ENCODE measurements at regions of chr19 and their contacts with region 1.

Region 1: GRCh38 chr19:9782330-9782729 is 13.8 kb upstream of the ZNF846 start:
- H3K4me3 ChIP-seq: no peak overlapping the region
- H3K27ac ChIP-seq: no peak overlapping the region
- H3K4me1 ChIP-seq: peaks cover 5% of the 10 kb centered on the region
- CTCF ChIP-seq: no peak

Region 2: GRCh38 chr19:9768175-9769112 is 13.9 kb before region 1 on chr19 and contains the start of gene ZNF846:
- CTCF ChIA-PET with region 1: no interaction called
- POLR2A ChIA-PET with region 1: interaction called, 12 read pairs
- H3K4me3 ChIP-seq: peak within 1 kb of the TSS; percentile 65
- H3K27ac ChIP-seq: peak within 1 kb of the TSS; percentile 87
- H3K4me1 ChIP-seq: no peaks in the 10 kb centered on the region
- CTCF ChIP-seq: peak; percentile 25; the same call in 1 of the 2 replicates